GM10248 (cell line): ENCODE measurements at regions of chr9 and their contacts with region 1.

Region 1: DNA sequence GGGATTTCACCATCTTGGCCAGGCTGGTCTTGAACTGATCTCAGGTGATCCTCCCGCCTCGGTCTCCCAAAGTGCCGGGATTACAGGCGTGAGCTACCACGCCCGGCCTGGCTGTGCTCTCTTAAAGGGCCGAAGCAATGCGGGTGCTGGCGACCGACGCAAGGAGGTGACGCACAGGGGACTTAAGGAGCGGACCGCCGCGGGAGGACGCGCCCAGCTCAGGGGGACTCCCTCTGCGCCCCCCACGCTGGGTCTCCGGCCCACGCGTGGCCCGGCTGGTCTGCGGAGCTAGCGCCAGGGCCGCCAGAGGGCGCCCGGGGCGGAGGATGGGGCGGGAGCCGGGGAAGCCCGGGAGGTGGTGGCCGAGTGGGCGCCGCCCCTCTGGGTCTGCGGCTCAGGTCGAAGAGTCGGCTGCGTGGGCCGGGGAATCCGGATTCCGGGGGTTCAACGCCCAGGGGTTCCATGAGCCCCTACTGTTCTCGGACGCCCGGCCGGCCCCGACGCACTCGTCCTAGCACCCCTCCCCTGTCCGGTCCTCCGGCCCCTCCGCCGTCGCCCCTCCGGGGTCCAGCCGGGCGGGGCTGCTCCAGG is 502 bp upstream of the CERCAM start:
- DNase-seq: peak; percentile 93
- CTCF ChIP-seq: peak; percentile 82

Region 2: DNA sequence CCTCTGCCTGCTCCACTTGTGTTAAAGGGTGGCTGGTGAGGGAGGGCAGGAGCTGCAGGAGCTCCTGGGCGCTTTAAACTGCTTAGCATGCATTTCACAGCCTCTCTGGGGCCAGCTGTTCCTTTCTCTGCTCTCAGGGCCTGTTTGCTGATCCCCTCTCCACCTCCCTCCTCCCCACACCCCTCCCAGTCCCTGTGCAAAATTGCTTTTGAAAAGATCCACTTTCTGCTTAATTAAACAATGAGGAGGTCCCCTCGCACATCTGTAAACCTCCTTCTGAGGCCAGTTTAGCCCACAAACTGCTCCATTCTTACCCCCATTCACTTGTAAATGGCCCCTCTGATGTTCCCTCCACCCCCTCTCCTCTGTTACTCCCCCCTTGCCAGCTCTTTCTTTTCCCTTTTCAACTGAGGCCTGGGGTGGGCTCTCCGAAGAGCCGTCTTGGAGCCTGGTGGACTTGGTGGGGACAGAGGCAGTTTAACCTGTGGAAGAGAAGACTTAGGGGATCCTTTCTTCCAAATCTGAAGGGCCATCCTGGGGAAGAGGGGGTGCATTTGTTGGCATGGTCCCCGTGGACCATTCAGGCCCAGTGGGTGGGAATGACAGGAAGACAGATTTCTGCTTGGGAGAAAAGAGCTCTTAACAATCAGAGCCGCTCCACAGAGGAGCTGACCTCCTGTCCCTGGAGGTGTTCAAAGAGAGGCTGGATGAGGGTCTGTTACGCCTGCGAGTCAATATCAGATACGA is 37.0 kb before region 1 on chr9:
- CTCF ChIA-PET with region 1: interaction called, 10 read pairs
- POLR2A ChIA-PET with region 1: no interaction called
- DNase-seq: no peak
- CTCF ChIP-seq: no peak

Region 3: GRCh38 chr9:128448746-128449145 is 28.6 kb after region 1 on chr9:
- CTCF ChIA-PET with region 1: interaction called, 16 read pairs
- POLR2A ChIA-PET with region 1: no interaction called
- DNase-seq: no peak
- CTCF ChIP-seq: no peak

Region 4: DNA sequence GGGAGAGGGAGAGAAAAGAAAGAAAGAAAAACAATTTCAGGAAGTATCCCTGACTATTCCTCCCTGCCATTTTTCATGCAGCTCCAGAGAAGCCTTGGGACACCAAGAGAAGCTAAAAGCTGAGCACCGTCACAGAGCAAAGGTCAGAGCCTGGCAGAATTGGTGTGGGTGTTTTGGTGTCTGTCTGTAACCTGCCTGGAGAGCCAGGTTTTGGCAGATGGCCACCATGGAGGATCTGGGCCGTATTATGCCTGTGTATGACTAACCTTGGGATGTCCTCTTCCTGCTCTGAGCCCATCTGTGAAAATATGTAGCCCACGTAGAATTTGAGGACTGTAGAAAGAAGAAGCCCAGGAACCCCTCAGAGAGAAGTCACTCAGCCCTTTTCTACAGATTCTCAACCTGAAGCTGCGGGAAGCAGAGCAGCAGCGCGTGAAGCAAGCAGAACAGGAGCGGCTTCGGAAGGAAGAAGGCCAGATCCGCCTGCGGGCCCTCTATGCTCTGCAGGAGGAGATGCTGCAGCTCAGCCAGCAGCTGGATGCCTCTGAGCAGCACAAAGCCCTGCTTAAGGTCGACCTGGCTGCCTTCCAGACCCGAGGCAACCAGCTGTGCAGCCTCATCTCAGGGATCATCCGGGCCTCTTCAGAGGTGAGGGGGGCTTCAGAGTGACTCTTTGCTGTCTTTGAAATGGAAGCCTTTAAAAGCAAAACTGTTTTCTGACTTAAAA is 103.2 kb after region 1 on chr9:
- CTCF ChIA-PET with region 1: no interaction called
- POLR2A ChIA-PET with region 1: no interaction called
- DNase-seq: no peak
- CTCF ChIP-seq: no peak

Region 5: GRCh38 chr9:128610897-128611296 is 190.7 kb after region 1 on chr9:
- CTCF ChIA-PET with region 1: no interaction called
- POLR2A ChIA-PET with region 1: no interaction called
- DNase-seq: no peak
- CTCF ChIP-seq: no peak